Mammary epithelial cell (primary cell): ENCODE measurements at regions of chr5 and their contacts with region 1.

Region 1: GRCh38 chr5:173293817-173294672 is 34.2 kb downstream of the STC2 start:
- DNase-seq: peak; percentile 65
- H3K4me3 ChIP-seq: no peak overlapping the region
- H3K27ac ChIP-seq: no peak overlapping the region
- H3K4me1 ChIP-seq: peaks cover 28% of the 10 kb centered on the region
- H3K27me3 ChIP-seq: no peaks in the 10 kb centered on the region
- CTCF ChIP-seq: peak; percentile 88 to 91

Region 2: GRCh38 chr5:172943283-172943841 is 350.7 kb before region 1 on chr5:
- CTCF ChIA-PET with region 1: no interaction called
- dilution Hi-C with region 1: no loop called
- in situ Hi-C with region 1: no loop called
- intact Hi-C with region 1: no loop called
- DNase-seq: no peak
- H3K4me3 ChIP-seq: no peak overlapping the region
- H3K27ac ChIP-seq: no peak overlapping the region
- H3K4me1 ChIP-seq: no peaks in the 10 kb centered on the region
- H3K27me3 ChIP-seq: no peaks in the 10 kb centered on the region
- CTCF ChIP-seq: no peak

Region 3: GRCh38 chr5:173498286-173498685 is 204.2 kb after region 1 on chr5:
- CTCF ChIA-PET with region 1: no interaction called
- dilution Hi-C with region 1: no loop called
- in situ Hi-C with region 1: no loop called
- intact Hi-C with region 1: loop called (anchors 1 kb)
- DNase-seq: no peak
- H3K4me3 ChIP-seq: no peak overlapping the region
- H3K27ac ChIP-seq: no peak overlapping the region
- H3K4me1 ChIP-seq: no peaks in the 10 kb centered on the region
- H3K27me3 ChIP-seq: no peaks in the 10 kb centered on the region
- CTCF ChIP-seq: no peak

Region 4: GRCh38 chr5:173573126-173573960 is 279.3 kb after region 1 on chr5:
- CTCF ChIA-PET with region 1: interaction called, 4 read pairs
- dilution Hi-C with region 1: no loop called
- in situ Hi-C with region 1: loop called in 1 of 2 experiments (anchors 10 kb)
- intact Hi-C with region 1: loop called (anchors 1 kb)
- DNase-seq: peak; percentile 37
- H3K4me3 ChIP-seq: peak overlapping the region in 1 of 3 experiments; percentile 16
- H3K27ac ChIP-seq: no peak overlapping the region
- H3K4me1 ChIP-seq: peaks cover 15% of the 10 kb centered on the region
- H3K27me3 ChIP-seq: no peaks in the 10 kb centered on the region
- CTCF ChIP-seq: peak; percentile 80 to 96

Region 5: GRCh38 chr5:173581408-173582215 is 287.6 kb after region 1 on chr5:
- CTCF ChIA-PET with region 1: interaction called, 3 read pairs
- dilution Hi-C with region 1: no loop called
- in situ Hi-C with region 1: loop called (anchors 5 to 10 kb)
- intact Hi-C with region 1: no loop called
- DNase-seq: no peak
- H3K4me3 ChIP-seq: no peak overlapping the region
- H3K27ac ChIP-seq: no peak overlapping the region
- H3K4me1 ChIP-seq: no peaks in the 10 kb centered on the region
- H3K27me3 ChIP-seq: peaks cover 2% of the 10 kb centered on the region
- CTCF ChIP-seq: peak; percentile 59 to 80

Region 6: GRCh38 chr5:173984218-173984617 is 690.2 kb after region 1 on chr5:
- CTCF ChIA-PET with region 1: interaction called, 5 read pairs
- dilution Hi-C with region 1: no loop called
- in situ Hi-C with region 1: loop called in 1 of 2 experiments (anchors 10 kb)
- intact Hi-C with region 1: loop called (anchors 1 kb)
- DNase-seq: no peak
- H3K4me3 ChIP-seq: no peak overlapping the region
- H3K27ac ChIP-seq: no peak overlapping the region
- H3K4me1 ChIP-seq: no peaks in the 10 kb centered on the region
- H3K27me3 ChIP-seq: no peaks in the 10 kb centered on the region
- CTCF ChIP-seq: peak; percentile 35 to 54

Region 7: DNA sequence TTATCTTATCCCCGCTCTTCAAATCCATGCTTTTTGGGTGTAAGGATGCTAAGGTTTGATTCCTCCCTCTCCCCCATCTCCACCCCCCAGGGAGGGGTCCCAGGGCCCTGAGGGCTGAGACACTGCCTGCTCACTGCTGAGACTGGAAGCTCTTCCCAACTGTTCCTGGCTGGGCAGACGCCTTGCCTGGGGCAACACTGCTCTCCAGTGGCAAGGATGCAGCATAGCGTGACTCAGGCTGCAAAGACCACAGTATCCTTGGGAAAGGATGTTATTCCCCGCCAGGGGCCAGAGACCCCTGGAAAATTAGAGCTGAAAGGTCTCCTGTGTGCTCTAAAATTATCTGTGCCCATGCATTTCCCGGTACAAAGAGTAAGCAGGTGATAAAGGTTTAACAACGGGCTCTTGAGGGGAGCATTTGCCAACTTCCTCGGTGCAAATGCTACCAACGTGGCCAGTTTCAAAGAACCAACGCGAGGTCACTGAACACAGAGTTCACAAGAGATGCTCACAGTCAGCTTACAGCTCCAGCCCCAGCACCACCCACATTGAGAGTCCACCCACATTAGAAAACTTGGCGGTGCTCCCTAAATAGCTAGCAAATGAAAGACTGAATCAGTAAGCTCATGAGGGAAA is 1023.3 kb after region 1 on chr5:
- CTCF ChIA-PET with region 1: no interaction called
- dilution Hi-C with region 1: no loop called
- in situ Hi-C with region 1: no loop called
- intact Hi-C with region 1: loop called (anchors 2 kb)
- DNase-seq: peak; percentile 29
- H3K4me3 ChIP-seq: no peak overlapping the region
- H3K27ac ChIP-seq: no peak overlapping the region
- H3K4me1 ChIP-seq: no peaks in the 10 kb centered on the region
- H3K27me3 ChIP-seq: peaks cover 1% of the 10 kb centered on the region
- CTCF ChIP-seq: peak; percentile 63 to 85